Natural killer cell (primary cell): ENCODE measurements at regions of chr7 and their contacts with region 1.

Region 1: DNA sequence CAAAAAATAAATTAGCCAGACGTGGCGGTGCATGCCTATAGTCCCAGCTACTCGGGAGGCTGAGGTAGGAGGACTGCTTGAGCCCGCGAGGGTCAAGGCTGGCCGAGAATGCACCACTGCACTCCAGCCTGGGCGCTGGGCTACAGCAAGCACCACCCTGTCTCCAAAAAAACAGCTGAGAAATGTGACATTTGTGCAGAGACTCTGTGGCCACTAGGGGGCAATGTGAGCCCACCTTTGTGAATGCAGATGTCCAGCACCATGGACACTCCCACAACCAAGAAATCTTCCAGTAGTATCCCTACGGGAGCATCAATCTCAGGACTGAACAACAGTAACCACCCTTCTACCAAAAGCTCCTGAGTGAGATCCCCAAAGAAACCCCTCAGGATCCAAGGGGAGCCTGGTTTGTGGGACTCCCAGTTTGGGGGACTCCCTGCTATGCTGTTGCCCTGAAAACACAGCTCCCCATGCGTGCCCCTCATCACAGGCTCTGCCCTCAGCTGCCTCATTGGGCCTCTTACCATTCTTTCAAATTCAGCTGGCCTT is 6.2 kb upstream of the AHCYL2 start:
- DNase-seq: peak; percentile 76 to 90
- ATAC-seq: peak; percentile 88 to 98 (median 98)
- H3K4me3 ChIP-seq: no peak overlapping the region
- H3K4me3 Mint-ChIP-seq: no peak overlapping the region
- H3K27ac ChIP-seq: no peak overlapping the region
- H3K27ac Mint-ChIP-seq: no peak overlapping the region
- H3K4me1 ChIP-seq: no peaks in the 10 kb centered on the region
- H3K4me1 Mint-ChIP-seq: no peaks in the 10 kb centered on the region
- H3K27me3 ChIP-seq: no peaks in the 10 kb centered on the region
- H3K27me3 Mint-ChIP-seq: peaks cover 6 to 8% of the 10 kb centered on the region in 2 donors
- CTCF ChIP-seq: peak; percentile 91

Region 2: GRCh38 chr7:129271500-129272355 is 53.1 kb after region 1 on chr7:
- intact Hi-C with region 1: loop called (anchors 1 kb)
- DNase-seq: peak; percentile 31 to 88
- ATAC-seq: peak; percentile 93 to 100 (median 100)
- H3K4me3 ChIP-seq: peak overlapping the region; percentile 4
- H3K4me3 Mint-ChIP-seq: peak overlapping the region; percentile 71
- H3K27ac ChIP-seq: no peak overlapping the region
- H3K27ac Mint-ChIP-seq: no peak overlapping the region
- H3K4me1 ChIP-seq: no peaks in the 10 kb centered on the region
- H3K4me1 Mint-ChIP-seq: peaks cover 0 to 5% of the 10 kb centered on the region in 2 donors
- H3K27me3 ChIP-seq: no peaks in the 10 kb centered on the region
- H3K27me3 Mint-ChIP-seq: no peaks in the 10 kb centered on the region
- CTCF ChIP-seq: peak; percentile 89

Region 3: GRCh38 chr7:129298268-129298893 is 79.8 kb after region 1 on chr7:
- intact Hi-C with region 1: loop called (anchors 1 kb)
- DNase-seq: peak; percentile 22 to 68
- ATAC-seq: no peak
- H3K4me3 ChIP-seq: no peak overlapping the region
- H3K4me3 Mint-ChIP-seq: no peak overlapping the region
- H3K27ac ChIP-seq: no peak overlapping the region
- H3K27ac Mint-ChIP-seq: no peak overlapping the region
- H3K4me1 ChIP-seq: no peaks in the 10 kb centered on the region
- H3K4me1 Mint-ChIP-seq: no peaks in the 10 kb centered on the region
- H3K27me3 ChIP-seq: no peaks in the 10 kb centered on the region
- H3K27me3 Mint-ChIP-seq: no peaks in the 10 kb centered on the region
- CTCF ChIP-seq: peak; percentile 64